ENCODE measurements at regions of chr2 and their contacts with region 1.

Region 1: DNA sequence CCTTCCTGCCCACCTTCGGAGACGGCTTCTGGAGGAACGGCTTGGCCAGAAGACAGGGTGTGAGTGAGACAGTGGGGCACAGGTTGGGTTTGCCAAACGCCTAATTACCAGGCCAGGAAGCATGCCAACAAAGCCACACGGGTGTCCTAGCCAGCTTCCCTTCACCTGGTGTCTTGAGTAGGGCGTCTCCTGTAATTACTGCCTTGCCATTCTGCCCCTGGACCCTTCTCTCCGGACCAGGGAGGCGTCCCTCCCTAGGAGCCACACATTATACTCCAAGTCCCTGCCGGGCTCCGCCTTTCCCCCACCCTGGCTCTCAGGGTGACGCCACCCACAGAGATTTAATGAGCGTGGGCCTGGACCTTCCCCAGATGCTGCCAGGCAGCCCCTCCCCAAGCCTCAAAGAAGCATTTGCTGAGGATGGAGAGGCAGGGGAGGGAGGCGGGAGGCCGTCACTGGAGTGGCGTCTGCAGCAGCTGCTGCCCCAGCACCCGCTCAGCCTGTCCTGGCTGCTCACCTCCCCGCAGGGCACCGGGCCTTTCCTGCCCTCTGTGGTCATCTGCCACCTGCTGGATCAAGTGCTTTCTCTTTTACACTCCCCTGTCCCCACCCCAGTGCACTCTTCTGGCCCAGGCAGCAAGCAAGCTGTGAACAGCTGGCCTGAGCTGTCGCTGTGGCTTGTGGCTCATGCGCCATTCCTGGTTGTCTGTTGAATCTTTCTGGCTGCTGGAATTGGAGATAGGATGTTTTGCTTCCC is 20.7 kb downstream of the FOSL2 start:
- DNase-seq: no peak
- H3K4me3 Mint-ChIP-seq: no peak overlapping the region
- H3K27ac Mint-ChIP-seq: peak overlapping the region; percentile 19
- H3K4me1 Mint-ChIP-seq: peaks cover 24% of the 10 kb centered on the region
- H3K27me3 Mint-ChIP-seq: no peaks in the 10 kb centered on the region
- CTCF ChIP-seq: no peak

Region 2: DNA sequence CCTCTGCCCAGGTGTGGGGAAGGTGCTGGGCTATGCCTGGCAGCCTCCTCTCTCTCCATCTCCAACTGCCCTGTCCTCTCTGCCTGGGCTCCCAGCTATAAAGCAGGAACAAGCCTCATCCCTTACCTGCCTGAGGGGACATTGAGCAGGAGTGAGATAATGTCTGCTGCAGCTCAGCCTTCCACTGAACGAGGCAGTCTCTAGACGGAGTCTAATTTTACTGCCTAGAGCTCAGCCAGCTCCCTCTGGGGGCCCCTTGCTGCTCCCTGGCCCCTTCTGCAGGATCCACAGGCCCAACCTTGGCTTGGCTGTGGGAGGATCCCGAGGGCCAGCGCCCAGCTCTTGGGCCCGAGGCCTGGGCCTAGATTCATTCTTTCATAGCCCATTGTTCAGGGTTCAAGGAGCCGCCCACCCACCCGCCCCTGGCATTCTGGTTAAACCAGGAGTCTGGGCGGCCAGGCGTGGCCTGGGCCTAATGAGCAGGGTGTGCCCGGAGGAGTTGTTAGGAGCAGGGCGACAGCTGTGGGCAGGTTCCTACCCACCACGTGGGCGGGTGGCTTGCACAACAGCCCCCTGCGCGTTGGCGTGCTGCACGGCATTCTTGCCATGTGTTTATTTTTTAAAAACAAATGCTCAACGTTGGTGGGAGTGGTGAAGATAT is 24.0 kb after region 1 on chr2:
- CTCF ChIA-PET with region 1: no interaction called
- POLR2A ChIA-PET with region 1: interaction called, 40 read pairs
- intact Hi-C with region 1: no loop called
- DNase-seq: peak; percentile 92
- H3K4me3 Mint-ChIP-seq: peak overlapping the region; percentile 29
- H3K27ac Mint-ChIP-seq: peak overlapping the region; percentile 67
- H3K4me1 Mint-ChIP-seq: peaks cover 41% of the 10 kb centered on the region
- H3K27me3 Mint-ChIP-seq: no peaks in the 10 kb centered on the region
- CTCF ChIP-seq: no peak

Measured in MCF 10A (cell line).